ENCODE measurements at regions of chr7 and their contacts with region 1.

Region 1: DNA sequence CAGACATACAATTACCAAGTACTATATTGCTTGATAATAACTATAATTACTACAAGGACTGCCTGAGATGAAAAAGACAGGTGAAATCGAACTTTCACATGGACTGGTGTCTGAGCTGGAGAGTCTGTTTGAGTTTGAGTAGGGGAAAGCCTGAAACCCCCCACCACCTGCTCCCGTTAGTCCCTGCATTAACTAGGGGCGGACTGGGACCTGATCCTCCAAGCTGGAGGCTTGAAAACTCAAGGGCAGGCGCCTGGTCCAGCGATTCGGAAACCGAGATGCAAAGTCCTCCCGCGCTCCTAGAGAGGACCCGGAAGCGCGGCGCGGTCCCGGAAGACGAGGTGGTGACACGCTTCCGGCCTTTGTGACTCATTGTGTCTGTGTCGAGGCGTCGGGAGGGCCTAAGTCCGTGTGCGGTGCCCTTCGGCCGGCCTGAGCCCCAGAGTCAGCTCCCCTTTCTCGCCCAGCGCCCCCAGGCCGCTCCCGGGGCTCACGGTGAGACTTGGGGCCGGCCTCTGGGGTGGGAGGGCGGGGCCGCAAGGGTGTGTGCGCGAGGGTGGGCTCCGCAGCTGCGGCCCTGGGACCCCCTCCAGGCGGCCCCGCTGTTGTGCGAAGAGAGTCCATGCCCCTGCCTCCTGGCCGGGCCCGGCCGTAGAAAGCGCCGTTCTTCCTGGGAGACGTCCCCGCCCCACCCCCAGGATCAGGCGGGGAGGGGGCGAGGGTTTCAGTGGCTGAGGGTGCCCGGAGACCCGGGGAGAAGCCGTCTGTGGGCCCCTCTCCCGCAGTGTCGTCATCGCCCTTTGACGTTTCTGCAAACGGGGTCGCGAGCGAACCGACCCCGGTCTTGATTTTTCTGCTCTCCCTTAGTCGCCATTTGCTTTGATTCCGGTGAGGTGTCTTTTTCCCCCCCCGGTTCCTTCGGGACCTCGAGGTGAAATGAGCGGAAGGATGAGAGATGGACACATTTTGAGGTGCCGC is at the start of gene ZKSCAN1:
- DNase-seq: peak; percentile 77 to 95
- ATAC-seq: peak; percentile 95 to 99 (median 99)
- H3K4me3 ChIP-seq: peak within 1 kb of the TSS; percentile 98
- H3K4me3 Mint-ChIP-seq: peak within 1 kb of the TSS; percentile 92
- H3K27ac ChIP-seq: peak within 1 kb of the TSS; percentile 93
- H3K27ac Mint-ChIP-seq: peak within 1 kb of the TSS; percentile 91 to 95
- H3K4me1 ChIP-seq: peaks cover 19% of the 10 kb centered on the region
- H3K4me1 Mint-ChIP-seq: peaks cover 24 to 27% of the 10 kb centered on the region in 2 donors
- H3K27me3 ChIP-seq: no peaks in the 10 kb centered on the region
- H3K27me3 Mint-ChIP-seq: peaks cover 5 to 6% of the 10 kb centered on the region in 2 donors
- CTCF ChIP-seq: no peak
- total RNA-seq, gene ZKSCAN1: 57.6 to 62.5 (median 60.8) TPM

Region 2: DNA sequence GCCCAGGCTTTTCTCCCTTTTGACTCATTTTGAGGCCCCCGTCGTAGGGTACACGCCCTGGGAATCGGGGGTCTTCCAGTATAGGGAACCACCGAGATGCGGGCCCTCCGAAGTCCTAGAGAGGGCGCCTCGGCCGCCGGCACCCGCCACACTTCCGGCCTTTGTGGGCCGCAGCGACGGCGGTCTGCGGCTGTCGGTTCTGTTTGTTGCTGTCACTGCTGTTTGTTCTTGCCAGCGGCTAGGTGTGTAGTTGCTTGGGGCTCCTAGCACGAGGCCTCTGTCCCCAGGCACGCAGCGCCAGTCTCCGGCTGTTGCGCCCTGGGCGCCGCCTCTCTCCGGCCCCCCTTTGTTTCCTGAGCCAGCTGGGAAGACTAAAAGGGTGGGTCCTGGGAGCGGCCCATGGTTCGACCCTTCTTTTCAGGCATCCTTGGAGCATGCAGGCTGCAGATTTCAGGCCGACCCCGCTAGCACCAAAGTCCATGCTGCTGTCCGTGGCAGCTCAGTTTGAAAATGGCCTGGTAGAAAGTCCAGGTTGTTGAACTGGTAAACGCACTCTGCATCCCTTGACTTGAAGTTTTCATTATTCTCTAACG is 17.9 kb before region 1 on chr7:
- intact Hi-C with region 1: loop called (anchors 1 kb)
- DNase-seq: peak; percentile 80 to 87
- ATAC-seq: peak; percentile 91 to 98 (median 97)
- H3K4me3 ChIP-seq: peak overlapping the region; percentile 39
- H3K4me3 Mint-ChIP-seq: peak overlapping the region; percentile 85
- H3K27ac ChIP-seq: peak overlapping the region; percentile 91
- H3K27ac Mint-ChIP-seq: peak overlapping the region; percentile 96 to 98
- H3K4me1 ChIP-seq: peaks cover 15% of the 10 kb centered on the region
- H3K4me1 Mint-ChIP-seq: peaks cover 15 to 17% of the 10 kb centered on the region in 2 donors
- H3K27me3 ChIP-seq: no peaks in the 10 kb centered on the region
- H3K27me3 Mint-ChIP-seq: peaks cover 0 to 6% of the 10 kb centered on the region in 2 donors
- CTCF ChIP-seq: peak; percentile 28